ENCODE measurements at regions of chr7 and their contacts with region 1.

Region 1: DNA sequence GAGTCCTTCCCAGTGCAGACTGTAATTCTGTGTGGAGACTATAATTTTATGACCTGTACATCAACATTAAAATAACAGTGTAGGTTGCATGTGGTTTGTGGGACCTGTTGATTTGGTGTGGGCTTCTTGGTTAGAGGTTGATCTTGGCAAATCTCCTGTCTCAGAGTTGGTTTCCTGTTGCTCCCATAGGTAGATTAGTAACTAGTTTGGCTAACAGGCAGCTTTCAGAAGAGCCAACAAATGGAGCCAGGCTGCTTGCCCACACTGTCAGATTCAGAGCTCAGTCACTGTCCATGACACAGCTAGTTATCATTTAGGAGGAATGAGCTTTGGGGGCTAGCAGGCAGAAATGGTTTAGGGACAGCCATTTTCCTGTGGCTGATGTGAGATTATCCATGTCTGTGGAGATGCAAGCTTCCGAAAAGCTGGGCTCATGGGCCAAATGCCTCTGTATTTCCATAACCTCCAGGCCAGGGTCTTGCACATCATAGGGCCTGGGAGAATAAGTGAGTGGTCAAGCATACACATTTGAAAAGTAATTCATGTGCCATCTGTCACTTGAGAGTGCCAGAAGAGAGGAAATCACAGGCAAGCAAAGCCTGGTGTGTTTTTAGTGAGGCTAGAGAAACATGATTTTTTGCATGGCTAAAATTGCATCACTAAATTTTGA is 33.4 kb downstream of the CCM2 start:
- DNase-seq: peak in 3 of 9 experiments; percentile 20 to 53 (median 34)
- ATAC-seq: peak; percentile 34
- H3K4me3 ChIP-seq: peak overlapping the region in 1 of 2 experiments; percentile 18
- H3K4me3 Mint-ChIP-seq: peak overlapping the region; percentile 75
- H3K27ac ChIP-seq: peak overlapping the region; percentile 11 to 51
- H3K27ac Mint-ChIP-seq: peak overlapping the region; percentile 91
- H3K4me1 ChIP-seq: peaks cover 77% of the 10 kb centered on the region
- H3K4me1 Mint-ChIP-seq: peaks cover 80% of the 10 kb centered on the region
- H3K27me3 ChIP-seq: no peaks in the 10 kb centered on the region
- H3K27me3 Mint-ChIP-seq: no peaks in the 10 kb centered on the region
- CTCF ChIP-seq: no peak

Region 2: DNA sequence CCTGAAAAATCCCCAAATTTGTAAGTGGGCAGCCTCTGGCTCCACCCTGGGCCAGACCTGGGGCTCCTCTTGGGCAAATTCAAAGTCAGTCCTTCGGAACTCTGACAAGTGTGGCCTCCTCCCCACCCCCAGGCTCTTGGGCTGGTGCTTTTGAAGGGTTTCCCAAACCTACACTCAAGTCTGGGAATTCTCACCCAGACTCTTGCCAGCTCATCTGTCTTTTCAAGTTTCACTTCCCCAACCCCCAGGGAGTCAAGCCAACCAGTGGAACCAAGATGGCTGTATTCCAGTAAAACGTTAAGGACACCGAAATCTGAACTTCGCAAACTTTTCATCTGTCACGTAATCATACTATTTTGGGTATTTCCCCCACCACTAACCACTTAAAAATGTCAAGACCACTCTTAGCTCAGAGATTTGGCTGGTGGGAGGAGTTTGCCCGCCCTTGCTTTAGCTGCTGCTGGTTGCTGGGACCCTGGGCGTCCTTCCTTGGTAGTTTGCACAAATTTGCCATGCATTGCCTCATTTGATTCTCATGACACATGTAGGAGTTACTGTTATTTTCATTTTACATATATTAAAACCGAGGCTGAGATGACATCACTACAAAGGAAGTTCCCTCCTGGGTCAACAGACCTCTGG is 52.9 kb before region 1 on chr7:
- CTCF ChIA-PET with region 1: interaction called, 75 read pairs
- POLR2A ChIA-PET with region 1: interaction called, 52 read pairs
- intact Hi-C with region 1: loop called (anchors 2 kb)
- DNase-seq: peak in 6 of 9 experiments; percentile 40 to 95 (median 76)
- ATAC-seq: peak; percentile 43
- H3K4me3 ChIP-seq: no peak overlapping the region
- H3K4me3 Mint-ChIP-seq: peak overlapping the region; percentile 94
- H3K27ac ChIP-seq: peak overlapping the region; percentile 78 to 86
- H3K27ac Mint-ChIP-seq: peak overlapping the region; percentile 99
- H3K4me1 ChIP-seq: peaks cover 72% of the 10 kb centered on the region
- H3K4me1 Mint-ChIP-seq: peaks cover 80% of the 10 kb centered on the region
- H3K27me3 ChIP-seq: no peaks in the 10 kb centered on the region
- H3K27me3 Mint-ChIP-seq: no peaks in the 10 kb centered on the region
- CTCF ChIP-seq: no peak

Region 3: GRCh38 chr7:45052011-45052410 is 18.6 kb after region 1 on chr7:
- CTCF ChIA-PET with region 1: interaction called, 3 read pairs
- POLR2A ChIA-PET with region 1: interaction called, 4 read pairs
- intact Hi-C with region 1: loop called in 1 of 2 experiments (anchors 2 kb)
- DNase-seq: no peak
- ATAC-seq: no peak
- H3K4me3 ChIP-seq: no peak overlapping the region
- H3K4me3 Mint-ChIP-seq: no peak overlapping the region
- H3K27ac ChIP-seq: no peak overlapping the region
- H3K27ac Mint-ChIP-seq: peak overlapping the region; percentile 73
- H3K4me1 ChIP-seq: no peaks in the 10 kb centered on the region
- H3K4me1 Mint-ChIP-seq: peaks cover 76% of the 10 kb centered on the region
- H3K27me3 ChIP-seq: no peaks in the 10 kb centered on the region
- H3K27me3 Mint-ChIP-seq: no peaks in the 10 kb centered on the region
- CTCF ChIP-seq: no peak